ENCODE measurements at regions of chr20 and their contacts with region 1.

Region 1: DNA sequence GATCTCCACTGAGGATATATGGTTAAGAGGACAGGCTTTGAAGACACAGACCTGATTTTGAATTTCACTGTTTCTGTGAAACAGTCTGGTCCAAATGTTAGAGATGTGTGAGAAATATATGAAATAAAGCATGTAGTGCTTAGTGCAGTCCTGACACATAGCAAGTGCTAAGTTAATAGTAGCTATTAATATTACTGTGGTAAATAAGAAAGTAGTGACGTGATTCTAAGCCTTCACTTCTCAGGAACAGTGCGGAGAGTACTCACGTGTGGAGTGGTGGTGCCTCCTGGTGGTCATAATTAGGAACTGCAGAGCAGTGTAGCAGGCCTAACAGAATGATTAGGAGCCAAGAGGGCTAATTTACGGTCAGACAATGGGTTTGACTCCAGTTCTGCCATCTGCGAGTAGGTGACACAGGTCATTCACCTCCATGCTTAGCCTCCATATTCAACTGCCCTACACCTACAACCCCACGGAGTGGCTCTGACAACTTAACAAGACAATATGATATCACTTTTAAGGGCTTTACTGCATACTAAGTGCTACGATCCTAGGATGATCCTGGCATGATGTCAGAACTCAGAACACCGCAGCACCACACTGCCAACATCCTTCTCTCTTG is 106.2 kb downstream of the JPH2 start:
- DNase-seq: peak; percentile 59 to 83 (median 73)
- ATAC-seq: peak; percentile 72 to 82
- H3K4me3 ChIP-seq: no peak overlapping the region
- H3K27ac ChIP-seq: no peak overlapping the region
- H3K4me1 ChIP-seq: no peaks in the 10 kb centered on the region
- H3K27me3 ChIP-seq: no peaks in the 10 kb centered on the region

Region 2: DNA sequence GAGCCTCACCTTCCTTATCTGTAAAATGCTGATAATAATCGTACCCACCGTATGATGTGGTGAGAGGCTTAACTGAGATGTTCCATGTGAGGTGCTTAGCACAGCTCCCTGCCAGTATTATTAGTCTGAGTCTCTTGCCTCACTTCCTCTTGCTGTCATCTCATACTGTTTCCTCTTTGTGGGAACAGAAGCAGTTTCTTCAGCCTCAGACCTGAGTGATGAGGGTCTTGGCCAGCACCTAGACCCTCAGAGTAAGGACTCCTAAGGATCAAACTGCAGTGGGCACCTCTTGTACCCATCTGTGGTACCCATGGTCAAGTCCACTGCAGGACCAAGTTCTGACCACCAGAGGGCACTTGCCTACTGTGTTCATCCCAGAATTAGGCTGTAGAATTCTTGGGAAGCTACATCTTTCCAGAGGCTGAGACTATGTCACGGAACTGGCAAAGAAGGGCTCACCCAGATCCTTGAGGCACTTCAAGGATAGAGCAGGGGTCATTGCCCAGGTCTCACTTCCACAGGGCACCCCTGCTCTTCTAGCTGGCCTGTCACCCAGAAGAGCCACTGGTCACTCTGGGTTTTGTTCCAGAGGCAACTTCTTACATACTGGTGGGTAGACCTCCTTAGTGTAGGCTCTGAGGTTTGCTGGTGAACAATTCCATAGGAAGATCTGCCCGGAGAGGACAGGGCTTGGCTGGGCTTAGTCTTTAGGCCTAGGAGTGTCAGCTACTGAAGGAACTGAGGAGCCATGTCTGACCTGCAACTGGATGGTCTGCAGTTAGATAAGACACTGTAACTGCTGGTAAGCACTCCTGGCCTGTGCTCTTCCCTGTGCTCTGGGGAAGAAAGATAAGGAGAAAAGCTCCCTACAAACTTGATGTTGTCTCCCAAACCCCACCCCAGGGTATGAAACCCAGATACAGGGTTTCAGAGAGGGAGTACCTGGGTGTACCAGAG is 542.6 kb before region 1 on chr20:
- intact Hi-C with region 1: loop called in 3 of 4 experiments (anchors 5 to 10 kb)
- DNase-seq: peak; percentile 61 to 87 (median 75)
- ATAC-seq: peak; percentile 68 to 73
- H3K4me3 ChIP-seq: no peak overlapping the region
- H3K27ac ChIP-seq: no peak overlapping the region
- H3K4me1 ChIP-seq: no peaks in the 10 kb centered on the region
- H3K27me3 ChIP-seq: no peaks in the 10 kb centered on the region

Region 3: DNA sequence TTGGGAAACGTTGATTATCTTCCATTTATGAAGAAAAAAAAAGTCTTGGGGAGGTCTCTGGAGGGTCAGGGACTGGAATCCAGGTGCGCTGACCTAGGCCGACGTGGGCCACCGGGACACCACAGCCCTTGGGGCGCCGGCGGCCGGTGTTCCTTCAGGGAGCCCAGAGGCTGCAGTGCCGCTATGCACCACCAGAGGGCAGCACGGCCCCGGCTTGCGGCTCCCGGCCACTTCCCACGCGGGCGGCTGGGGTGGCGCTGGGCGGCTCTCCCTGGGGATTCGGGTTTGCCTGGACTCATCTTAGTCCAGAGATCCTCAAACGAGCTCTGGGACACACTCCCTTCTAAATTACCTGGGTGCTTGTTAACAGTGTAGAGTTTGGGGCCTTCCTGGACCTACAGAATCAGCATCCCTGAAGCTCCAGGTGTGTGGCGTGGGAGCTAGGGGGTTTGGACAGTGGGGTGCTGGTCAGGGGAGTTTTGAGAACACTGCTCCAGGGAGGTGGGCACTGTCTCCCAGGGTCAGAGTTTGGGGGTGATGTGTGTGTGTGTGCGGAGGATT is 330.9 kb before region 1 on chr20:
- intact Hi-C with region 1: loop called (anchors 2 to 5 kb)
- DNase-seq: peak; percentile 72 to 90 (median 90)
- ATAC-seq: peak; percentile 78 to 85
- H3K4me3 ChIP-seq: no peak overlapping the region
- H3K27ac ChIP-seq: no peak overlapping the region
- H3K4me1 ChIP-seq: no peaks in the 10 kb centered on the region
- H3K27me3 ChIP-seq: no peaks in the 10 kb centered on the region

Region 4: GRCh38 chr20:43844778-43845614 is 235.8 kb before region 1 on chr20:
- intact Hi-C with region 1: loop called in 1 of 4 experiments (anchors 5 kb)
- DNase-seq: peak in 1 of 3 donors; percentile 43
- ATAC-seq: peak; percentile 57 to 84
- H3K4me3 ChIP-seq: no peak overlapping the region
- H3K27ac ChIP-seq: no peak overlapping the region
- H3K4me1 ChIP-seq: no peaks in the 10 kb centered on the region
- H3K27me3 ChIP-seq: no peaks in the 10 kb centered on the region